ENCODE measurements at regions of chr20 and their contacts with region 1.

Region 1: DNA sequence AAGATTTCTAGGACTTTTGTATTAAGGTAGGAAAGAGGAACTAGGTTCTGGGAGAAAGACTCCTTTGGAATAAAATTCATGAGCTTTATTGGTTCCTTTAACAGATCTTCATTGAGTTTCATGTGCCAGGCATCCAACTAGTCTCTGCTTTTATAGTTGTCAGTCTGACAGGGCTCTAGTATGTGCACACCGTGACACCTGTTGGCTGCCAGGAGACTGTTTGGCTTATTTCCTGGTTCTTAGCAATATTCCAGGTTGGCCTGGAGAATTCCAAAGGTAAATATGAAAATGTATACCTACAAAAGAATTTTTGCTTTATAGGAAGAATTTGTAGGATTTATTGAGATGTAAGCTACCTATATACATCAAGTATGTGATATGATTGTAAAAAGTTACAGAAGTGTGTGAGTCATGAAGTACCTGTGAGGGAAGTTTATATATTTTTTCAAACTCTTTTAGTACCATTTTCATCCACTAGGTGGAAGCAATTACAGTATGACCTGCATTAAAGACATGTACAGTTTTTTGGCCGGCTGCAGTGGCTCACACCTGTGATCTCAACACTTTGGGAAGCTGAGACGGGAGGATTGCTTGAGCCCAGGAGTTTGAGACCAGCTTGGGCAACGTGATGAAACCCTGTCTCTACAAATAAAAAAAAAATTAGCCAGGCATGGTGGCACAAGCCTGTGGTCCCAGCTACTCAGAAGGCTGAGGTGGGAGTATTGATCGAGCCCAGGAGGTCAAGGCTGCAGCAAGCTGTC is 35.2 kb downstream of the NDUFAF5 start:
- DNase-seq: peak; percentile 20
- ATAC-seq: peak; percentile 62
- H3K4me3 Mint-ChIP-seq: no peak overlapping the region
- H3K27ac Mint-ChIP-seq: no peak overlapping the region
- H3K4me1 Mint-ChIP-seq: peaks cover 5% of the 10 kb centered on the region
- H3K27me3 Mint-ChIP-seq: no peaks in the 10 kb centered on the region
- CTCF ChIP-seq: peak; percentile 54; the same call in 1 of the 2 replicates

Region 2: GRCh38 chr20:13953227-13953626 is 133.2 kb after region 1 on chr20:
- CTCF ChIA-PET with region 1: interaction called, 20 read pairs
- POLR2A ChIA-PET with region 1: no interaction called
- DNase-seq: peak; percentile 68
- ATAC-seq: peak; percentile 95
- H3K4me3 Mint-ChIP-seq: no peak overlapping the region
- H3K27ac Mint-ChIP-seq: no peak overlapping the region
- H3K4me1 Mint-ChIP-seq: peaks cover 2% of the 10 kb centered on the region; the same call in 1 of the 2 replicates
- H3K27me3 Mint-ChIP-seq: no peaks in the 10 kb centered on the region; the same call in 1 of the 2 replicates
- CTCF ChIP-seq: peak; percentile 62

Region 3: GRCh38 chr20:13995081-13995694 is 175.1 kb after region 1 on chr20 and contains the start of gene MACROD2:
- CTCF ChIA-PET with region 1: interaction called, 12 read pairs
- POLR2A ChIA-PET with region 1: no interaction called
- DNase-seq: peak; percentile 98
- ATAC-seq: peak; percentile 93
- H3K4me3 Mint-ChIP-seq: peak within 1 kb of the TSS; percentile 90
- H3K27ac Mint-ChIP-seq: peak within 1 kb of the TSS; percentile 32; the same call in 1 of the 2 replicates
- H3K4me1 Mint-ChIP-seq: peaks cover 16% of the 10 kb centered on the region
- H3K27me3 Mint-ChIP-seq: peaks cover 17% of the 10 kb centered on the region
- CTCF ChIP-seq: no peak
- total RNA-seq, gene MACROD2: 3.0 to 4.1 TPM (median 3.5 TPM) in 3 replicates

Region 4: DNA sequence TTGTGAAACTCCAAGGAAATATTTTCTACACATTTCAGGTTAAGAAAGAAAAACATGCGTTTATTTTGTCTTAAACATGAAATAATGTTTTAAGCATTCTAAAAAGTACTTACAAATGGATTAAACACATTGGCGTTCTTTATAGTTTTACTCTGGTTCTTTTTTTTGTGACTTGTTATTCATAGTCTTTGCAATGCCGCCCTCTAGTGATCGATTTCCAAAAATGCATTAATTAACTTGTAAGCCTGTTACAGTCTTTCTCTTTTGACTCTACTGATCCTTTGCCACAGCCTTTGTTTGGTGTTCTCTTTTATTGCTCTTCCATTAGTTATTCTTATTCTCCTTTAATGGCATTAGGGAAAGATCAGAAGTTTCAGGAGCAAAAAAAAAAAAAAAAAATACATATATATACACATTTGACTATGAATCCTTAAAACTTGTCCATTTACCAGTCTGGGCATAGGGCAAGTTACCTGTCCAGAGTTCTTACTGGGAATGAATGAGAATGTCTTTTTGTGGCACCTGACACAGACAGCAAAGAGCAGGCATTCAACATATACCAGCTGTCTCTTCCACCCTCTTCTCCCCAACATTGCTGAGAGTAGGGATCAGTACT is 235.2 kb after region 1 on chr20:
- CTCF ChIA-PET with region 1: interaction called, 24 read pairs
- POLR2A ChIA-PET with region 1: no interaction called
- DNase-seq: no peak
- ATAC-seq: 0 out of 2 replicates have a peak, but pooled peaks have one; percentile 28
- H3K4me3 Mint-ChIP-seq: no peak overlapping the region
- H3K27ac Mint-ChIP-seq: no peak overlapping the region
- H3K4me1 Mint-ChIP-seq: peaks cover 5% of the 10 kb centered on the region
- H3K27me3 Mint-ChIP-seq: no peaks in the 10 kb centered on the region
- CTCF ChIP-seq: 0 out of 2 replicates have a peak, but pooled peaks have one; percentile 30

Measured in WTC11 (cell line).